ENCODE measurements at regions of chr18 and their contacts with region 1.

Region 1: DNA sequence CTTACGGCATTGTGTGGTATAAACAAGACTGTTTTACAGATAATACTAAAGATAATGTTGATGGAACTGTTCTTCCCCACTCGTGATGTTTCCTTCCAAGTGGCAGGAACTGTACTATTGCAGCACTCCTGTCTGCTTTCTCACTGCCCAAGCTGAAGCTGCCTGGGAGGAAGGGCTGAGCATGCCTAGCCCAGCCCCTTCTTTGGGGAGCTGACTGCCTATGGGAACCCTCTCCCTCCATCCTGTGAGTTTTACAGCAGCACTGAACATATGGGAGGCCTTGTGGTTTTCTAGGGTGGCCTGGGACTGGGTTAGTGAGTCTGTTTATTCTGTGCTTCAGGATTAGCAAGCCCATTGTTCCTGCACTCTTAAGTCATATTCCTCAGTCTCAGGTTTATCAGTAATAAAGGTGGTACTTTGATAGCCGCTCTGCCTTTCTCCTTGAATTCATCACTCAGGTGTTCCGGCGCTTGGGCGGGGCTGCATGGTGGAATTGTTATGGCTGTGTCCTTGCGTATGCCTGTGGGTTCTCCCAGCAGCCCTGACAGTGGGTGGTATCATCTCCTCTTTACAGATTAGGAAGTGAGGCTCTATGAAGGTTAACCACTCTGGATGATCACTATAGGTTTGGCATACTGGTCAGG is 379.7 kb downstream of the PTPRM start:
- DNase-seq: peak in 6 of 9 donors; percentile 2 to 42 (median 29)
- ATAC-seq: peak; percentile 59
- H3K4me3 ChIP-seq: peak overlapping the region; percentile 50
- H3K4me3 Mint-ChIP-seq: peak overlapping the region; percentile 18 to 87 (median 56)
- H3K27ac ChIP-seq: no peak overlapping the region
- H3K27ac Mint-ChIP-seq: peak overlapping the region in 8 of 9 donors; percentile 42 to 86 (median 68)
- H3K4me1 ChIP-seq: peaks cover 5 to 9% of the 10 kb centered on the region in 2 donors
- H3K4me1 Mint-ChIP-seq: peaks cover 0 to 24% (median 8%) of the 10 kb centered on the region in 7 donors
- H3K27me3 ChIP-seq: no peaks in the 10 kb centered on the region
- H3K27me3 Mint-ChIP-seq: no peaks in the 10 kb centered on the region

Region 2: GRCh38 chr18:7872569-7872968 is 74.3 kb before region 1 on chr18:
- CTCF ChIA-PET with region 1: no interaction called
- POLR2A ChIA-PET with region 1: no interaction called
- intact Hi-C with region 1: no loop called
- DNase-seq: no peak
- ATAC-seq: no peak
- H3K4me3 ChIP-seq: no peak overlapping the region
- H3K4me3 Mint-ChIP-seq: no peak overlapping the region
- H3K27ac ChIP-seq: no peak overlapping the region
- H3K27ac Mint-ChIP-seq: no peak overlapping the region
- H3K4me1 ChIP-seq: no peaks in the 10 kb centered on the region
- H3K4me1 Mint-ChIP-seq: no peaks in the 10 kb centered on the region
- H3K27me3 ChIP-seq: no peaks in the 10 kb centered on the region
- H3K27me3 Mint-ChIP-seq: no peaks in the 10 kb centered on the region

Region 3: DNA sequence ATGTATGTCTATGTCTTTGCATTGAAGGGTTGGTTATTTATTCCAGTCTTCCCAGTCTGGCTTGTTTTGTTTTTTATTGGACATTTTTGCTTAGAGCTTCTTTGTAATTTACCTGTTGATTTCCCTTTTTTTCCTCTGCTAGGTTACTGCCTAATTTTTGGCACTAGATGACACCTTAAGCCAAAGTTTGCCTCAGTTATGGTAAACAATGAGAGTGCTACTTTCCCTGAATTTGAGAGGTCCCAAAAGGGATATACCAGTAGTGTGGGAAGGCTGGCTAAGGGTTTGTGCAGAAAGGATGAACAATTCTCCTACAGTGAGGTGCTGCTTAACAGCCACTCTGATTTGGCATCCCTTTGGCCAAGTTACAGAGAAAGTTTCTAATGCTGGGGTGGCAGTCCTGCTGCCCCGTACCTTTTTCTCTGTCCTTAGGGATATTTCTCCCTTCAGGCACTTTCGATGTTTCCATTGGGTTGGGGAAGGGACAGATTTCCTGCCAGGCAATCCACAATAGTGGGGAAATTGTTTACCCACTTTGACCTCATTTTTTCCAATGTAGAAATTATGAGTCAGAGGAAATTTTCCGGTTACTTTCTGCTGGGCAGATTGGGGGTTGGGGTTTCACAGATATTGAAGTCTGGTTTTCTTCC is 24.8 kb before region 1 on chr18:
- CTCF ChIA-PET with region 1: no interaction called
- POLR2A ChIA-PET with region 1: no interaction called
- intact Hi-C with region 1: no loop called
- DNase-seq: no peak
- ATAC-seq: no peak
- H3K4me3 ChIP-seq: no peak overlapping the region
- H3K4me3 Mint-ChIP-seq: no peak overlapping the region
- H3K27ac ChIP-seq: no peak overlapping the region
- H3K27ac Mint-ChIP-seq: no peak overlapping the region
- H3K4me1 ChIP-seq: no peaks in the 10 kb centered on the region
- H3K4me1 Mint-ChIP-seq: no peaks in the 10 kb centered on the region
- H3K27me3 ChIP-seq: no peaks in the 10 kb centered on the region
- H3K27me3 Mint-ChIP-seq: no peaks in the 10 kb centered on the region

Region 4: DNA sequence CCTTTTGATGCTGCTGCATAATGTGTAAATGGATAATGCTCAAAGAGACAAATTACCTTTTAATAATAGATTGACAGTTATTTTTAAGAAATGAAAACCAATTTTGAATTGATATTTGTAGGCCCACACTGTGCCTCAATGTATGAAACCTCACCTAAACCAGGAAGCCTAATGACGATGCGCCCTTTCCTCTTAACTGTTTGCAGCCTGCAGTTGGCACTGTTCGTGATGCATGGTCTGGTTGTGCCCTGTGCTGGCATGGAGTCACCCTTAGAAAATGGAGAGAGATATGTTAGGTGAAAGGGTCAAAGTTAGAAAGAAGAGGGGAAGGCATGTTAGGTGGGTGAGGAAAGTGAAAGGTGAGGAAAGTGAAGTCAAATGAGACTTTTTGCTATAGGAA is 10.4 kb after region 1 on chr18:
- CTCF ChIA-PET with region 1: no interaction called
- POLR2A ChIA-PET with region 1: no interaction called
- intact Hi-C with region 1: loop called in 1 of 2 experiments (anchors 1 kb)
- DNase-seq: no peak
- ATAC-seq: no peak
- H3K4me3 ChIP-seq: no peak overlapping the region
- H3K4me3 Mint-ChIP-seq: peak overlapping the region in 9 of 10 donors; percentile 31 to 82 (median 77)
- H3K27ac ChIP-seq: no peak overlapping the region
- H3K27ac Mint-ChIP-seq: peak overlapping the region in 8 of 9 donors; percentile 25 to 89 (median 76)
- H3K4me1 ChIP-seq: no peaks in the 10 kb centered on the region
- H3K4me1 Mint-ChIP-seq: peaks cover 0 to 47% (median 27%) of the 10 kb centered on the region in 7 donors
- H3K27me3 ChIP-seq: no peaks in the 10 kb centered on the region
- H3K27me3 Mint-ChIP-seq: no peaks in the 10 kb centered on the region

Region 5: DNA sequence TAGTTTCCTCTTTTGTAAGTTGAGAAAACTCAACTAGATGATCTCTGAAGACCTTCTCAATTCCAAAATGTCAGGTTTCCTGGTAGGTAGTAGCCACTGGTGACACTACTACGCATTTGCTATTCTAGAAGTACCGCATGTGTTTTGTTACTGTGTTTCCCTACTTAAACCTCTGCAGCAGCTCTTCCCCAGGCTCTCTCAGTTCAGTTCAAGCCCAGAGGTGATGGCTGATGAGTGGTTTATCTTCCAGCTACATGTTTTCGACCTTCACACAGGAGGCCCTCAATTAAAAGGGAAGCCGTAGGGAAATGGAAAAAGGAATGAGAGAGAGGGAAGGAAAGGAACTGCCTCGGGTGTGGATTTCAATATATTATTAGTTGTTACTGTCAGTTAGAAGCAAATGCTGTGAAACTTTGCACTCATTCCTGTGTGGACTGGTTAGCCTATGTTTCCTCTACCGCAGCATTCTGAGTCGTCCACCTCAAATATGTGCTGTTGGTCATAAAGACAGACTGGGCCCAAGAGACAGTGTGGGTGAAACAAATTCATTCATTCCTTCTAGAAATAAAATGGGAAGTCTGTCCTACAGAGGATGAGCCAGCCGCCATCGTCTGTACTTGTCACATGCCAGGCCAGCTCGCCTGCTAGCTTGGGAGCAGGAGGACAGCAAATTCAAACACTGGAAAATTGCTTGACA is 207.2 kb after region 1 on chr18:
- CTCF ChIA-PET with region 1: no interaction called
- POLR2A ChIA-PET with region 1: no interaction called
- intact Hi-C with region 1: no loop called
- DNase-seq: no peak
- ATAC-seq: no peak
- H3K4me3 ChIP-seq: no peak overlapping the region
- H3K4me3 Mint-ChIP-seq: no peak overlapping the region
- H3K27ac ChIP-seq: no peak overlapping the region
- H3K27ac Mint-ChIP-seq: no peak overlapping the region
- H3K4me1 ChIP-seq: no peaks in the 10 kb centered on the region
- H3K4me1 Mint-ChIP-seq: no peaks in the 10 kb centered on the region
- H3K27me3 ChIP-seq: no peaks in the 10 kb centered on the region
- H3K27me3 Mint-ChIP-seq: no peaks in the 10 kb centered on the region